MCF 10A (cell line): ENCODE measurements at regions of chr2 and their contacts with region 1.

Region 1: GRCh38 chr2:44479122-44479887 is 117.6 kb downstream of the CAMKMT start:
- DNase-seq: peak; percentile 86
- H3K4me3 Mint-ChIP-seq: no peak overlapping the region
- H3K27ac Mint-ChIP-seq: no peak overlapping the region
- H3K4me1 Mint-ChIP-seq: no peaks in the 10 kb centered on the region
- H3K27me3 Mint-ChIP-seq: no peaks in the 10 kb centered on the region
- CTCF ChIP-seq: peak; percentile 99

Region 2: GRCh38 chr2:44392338-44392943 is 86.9 kb before region 1 on chr2:
- CTCF ChIA-PET with region 1: interaction called, 57 read pairs
- POLR2A ChIA-PET with region 1: interaction called, 5 read pairs
- intact Hi-C with region 1: loop called (anchors 1 kb)
- DNase-seq: peak; percentile 67
- H3K4me3 Mint-ChIP-seq: no peak overlapping the region
- H3K27ac Mint-ChIP-seq: no peak overlapping the region
- H3K4me1 Mint-ChIP-seq: no peaks in the 10 kb centered on the region
- H3K27me3 Mint-ChIP-seq: no peaks in the 10 kb centered on the region
- CTCF ChIP-seq: peak; percentile 58

Region 3: GRCh38 chr2:44498551-44498950 is 19.2 kb after region 1 on chr2:
- CTCF ChIA-PET with region 1: interaction called, 14 read pairs
- POLR2A ChIA-PET with region 1: no interaction called
- intact Hi-C with region 1: no loop called
- DNase-seq: no peak
- H3K4me3 Mint-ChIP-seq: no peak overlapping the region
- H3K27ac Mint-ChIP-seq: no peak overlapping the region
- H3K4me1 Mint-ChIP-seq: no peaks in the 10 kb centered on the region
- H3K27me3 Mint-ChIP-seq: no peaks in the 10 kb centered on the region
- CTCF ChIP-seq: no peak

Region 4: DNA sequence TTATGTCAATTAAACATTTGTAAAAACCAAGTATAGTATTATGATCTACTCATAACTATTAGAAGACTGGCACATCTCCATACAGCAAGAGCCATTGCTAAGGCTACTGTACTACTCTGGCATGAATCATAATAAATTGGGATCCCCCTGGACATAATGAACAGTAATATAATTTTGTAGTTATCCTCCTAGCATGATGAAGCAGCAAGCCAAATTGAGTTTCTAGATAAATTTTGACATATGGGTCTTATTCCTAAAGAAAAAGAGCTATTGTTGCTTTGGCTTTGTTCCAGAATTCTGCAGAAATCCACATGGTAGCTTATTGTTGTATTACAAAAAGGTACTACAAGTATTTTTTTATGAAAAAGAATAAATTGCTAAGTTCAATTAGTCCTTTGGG is 86.8 kb after region 1 on chr2:
- CTCF ChIA-PET with region 1: interaction called, 11 read pairs
- POLR2A ChIA-PET with region 1: no interaction called
- intact Hi-C with region 1: no loop called
- DNase-seq: no peak
- H3K4me3 Mint-ChIP-seq: no peak overlapping the region
- H3K27ac Mint-ChIP-seq: no peak overlapping the region
- H3K4me1 Mint-ChIP-seq: peaks cover 9% of the 10 kb centered on the region
- H3K27me3 Mint-ChIP-seq: no peaks in the 10 kb centered on the region
- CTCF ChIP-seq: no peak

Region 5: GRCh38 chr2:44746856-44747617 is 267.7 kb after region 1 on chr2:
- CTCF ChIA-PET with region 1: interaction called, 10 read pairs
- POLR2A ChIA-PET with region 1: no interaction called
- intact Hi-C with region 1: no loop called
- DNase-seq: peak; percentile 71
- H3K4me3 Mint-ChIP-seq: no peak overlapping the region
- H3K27ac Mint-ChIP-seq: no peak overlapping the region
- H3K4me1 Mint-ChIP-seq: peaks cover 11% of the 10 kb centered on the region
- H3K27me3 Mint-ChIP-seq: no peaks in the 10 kb centered on the region
- CTCF ChIP-seq: no peak